Body of pancreas (tissue), 4 donors: ENCODE measurements at regions of chr12 and their contacts with region 1.

Region 1: DNA sequence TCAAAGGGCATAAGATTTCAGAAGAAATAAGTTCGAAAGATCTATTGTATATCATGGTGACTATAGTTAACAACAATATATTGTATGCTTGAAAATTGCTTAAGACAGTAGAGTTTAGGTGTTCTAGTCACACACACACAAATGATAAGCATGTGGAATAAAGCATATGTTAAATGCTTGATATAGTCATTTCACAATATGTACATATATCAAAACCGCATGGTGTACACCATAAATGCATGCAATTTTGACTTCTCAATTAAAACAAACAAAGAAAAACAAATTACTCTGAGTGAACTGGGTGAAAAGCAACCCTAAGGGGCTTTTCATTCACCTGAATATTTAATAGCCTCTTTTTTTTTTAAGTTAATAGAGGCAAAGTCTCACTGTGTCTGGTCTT is 40.3 kb upstream of the BCAT1 start:
- DNase-seq: no peak
- ATAC-seq: no peak
- H3K4me3 ChIP-seq: no peak overlapping the region
- H3K27ac ChIP-seq: no peak overlapping the region
- H3K4me1 ChIP-seq: peaks cover 5% of the 10 kb centered on the region
- H3K27me3 ChIP-seq: no peaks in the 10 kb centered on the region
- CTCF ChIP-seq: no peak
- POLR2A ChIP-seq: no peak

Region 2: DNA sequence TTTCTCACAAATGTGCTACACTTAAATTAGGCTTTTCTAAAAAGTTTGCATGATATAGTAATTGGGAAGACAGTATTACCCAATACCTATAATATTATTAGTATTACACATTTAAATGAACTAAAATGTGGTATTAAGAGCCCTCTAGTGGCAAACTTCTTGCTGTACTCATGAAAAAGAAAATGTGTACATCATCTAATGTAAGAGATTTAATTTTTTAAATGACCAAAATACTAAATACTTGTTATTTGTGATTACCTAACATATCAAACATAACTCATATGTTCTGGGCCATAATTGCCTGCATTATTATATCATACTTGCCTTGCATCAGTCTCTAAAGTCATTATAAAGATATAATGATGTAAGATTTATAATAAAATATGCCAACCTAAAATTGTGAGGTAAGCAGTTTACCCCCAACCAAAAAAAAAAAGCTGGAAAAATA is 141.5 kb after region 1 on chr12:
- intact Hi-C with region 1: loop called (anchors 5 kb)
- DNase-seq: no peak
- ATAC-seq: peak; percentile 48
- H3K4me3 ChIP-seq: no peak overlapping the region
- H3K27ac ChIP-seq: no peak overlapping the region
- H3K4me1 ChIP-seq: no peaks in the 10 kb centered on the region
- H3K27me3 ChIP-seq: no peaks in the 10 kb centered on the region
- CTCF ChIP-seq: peak; percentile 43 to 78 (median 71)
- POLR2A ChIP-seq: no peak

Region 3: GRCh38 chr12:25151476-25151875 is 162.3 kb after region 1 on chr12:
- intact Hi-C with region 1: no loop called
- DNase-seq: peak in 3 of 4 donors; percentile 14 to 43 (median 16)
- ATAC-seq: peak; percentile 63
- H3K4me3 ChIP-seq: no peak overlapping the region
- H3K27ac ChIP-seq: no peak overlapping the region
- H3K4me1 ChIP-seq: no peaks in the 10 kb centered on the region
- H3K27me3 ChIP-seq: no peaks in the 10 kb centered on the region
- CTCF ChIP-seq: no peak
- POLR2A ChIP-seq: no peak